Heart right ventricle (tissue), 16 donors: ENCODE measurements at regions of chr21 and their contacts with region 1.

Region 1: DNA sequence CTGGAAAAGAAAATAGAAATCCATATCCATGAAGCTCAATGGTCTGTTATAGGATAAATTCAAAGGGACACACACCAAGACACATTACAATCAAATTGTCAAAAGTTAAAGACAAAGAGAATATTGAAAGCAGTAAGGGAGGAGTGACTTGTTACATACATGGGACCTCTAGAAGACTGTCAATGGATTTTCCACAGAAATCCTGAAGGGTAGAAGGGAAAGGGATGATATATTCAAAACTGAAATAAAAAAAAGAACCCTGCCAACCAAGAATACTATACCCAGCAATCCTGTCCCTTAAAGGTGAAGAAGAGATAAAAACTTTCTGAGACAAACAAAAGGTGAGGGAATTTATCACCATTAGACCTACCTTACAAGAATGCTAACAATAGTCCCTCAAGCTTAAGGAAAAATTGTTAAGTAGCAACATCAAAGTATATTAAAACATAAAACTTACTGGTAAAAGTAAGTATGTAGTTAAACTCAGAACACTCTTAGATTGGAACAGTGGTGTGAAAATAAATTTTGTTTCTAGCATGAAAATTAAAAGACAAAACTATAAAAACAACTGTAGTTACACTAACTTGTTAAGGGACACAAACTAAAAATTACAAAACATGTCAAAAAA is 103.2 kb upstream of the APP start:
- DNase-seq: no peak
- ATAC-seq: no peak
- H3K4me3 ChIP-seq: no peak overlapping the region
- H3K27ac ChIP-seq: no peak overlapping the region
- H3K4me1 ChIP-seq: no peaks in the 10 kb centered on the region
- H3K27me3 ChIP-seq: no peaks in the 10 kb centered on the region
- CTCF ChIP-seq: no peak

Region 2: DNA sequence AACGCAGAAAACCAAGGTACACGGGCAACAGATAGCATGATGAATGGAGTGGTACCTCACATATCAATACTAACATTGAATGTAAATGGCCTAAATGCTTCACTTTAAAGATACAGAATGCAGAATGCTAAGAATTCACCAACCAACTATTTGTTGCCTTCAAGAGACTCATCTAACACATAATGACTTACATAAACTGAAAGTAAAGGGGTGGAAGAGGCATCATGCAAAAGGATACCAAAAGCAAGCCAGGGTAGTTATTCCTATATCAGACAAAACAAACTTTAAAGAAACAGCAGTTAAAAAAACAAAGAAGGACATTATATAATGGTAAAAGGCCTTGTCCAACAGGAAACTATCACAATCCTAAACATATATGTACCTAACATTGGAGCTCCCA is 33.8 kb after region 1 on chr21:
- intact Hi-C with region 1: no loop called
- DNase-seq: no peak
- ATAC-seq: no peak
- H3K4me3 ChIP-seq: no peak overlapping the region
- H3K27ac ChIP-seq: no peak overlapping the region
- H3K4me1 ChIP-seq: no peaks in the 10 kb centered on the region
- H3K27me3 ChIP-seq: no peaks in the 10 kb centered on the region
- CTCF ChIP-seq: no peak

Region 3: DNA sequence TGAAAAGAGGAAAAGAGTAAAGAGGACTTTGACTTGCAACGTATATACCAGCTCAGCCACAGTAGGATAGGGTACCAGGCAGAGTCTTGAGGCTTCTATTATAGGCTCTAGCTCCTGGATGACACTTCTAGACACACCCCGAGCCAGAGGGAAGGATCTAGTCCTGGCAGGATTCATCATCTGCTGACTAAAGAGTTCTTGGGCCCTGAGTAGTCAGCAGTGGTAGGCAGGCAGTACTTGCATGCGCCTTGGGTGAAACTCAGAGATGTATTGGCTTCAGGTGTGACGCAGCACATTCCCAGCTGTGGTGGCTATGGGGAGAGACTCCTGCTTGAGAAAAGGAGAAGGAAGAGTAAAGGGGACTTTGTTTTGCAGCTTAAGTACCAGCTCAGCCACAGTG is 59.1 kb after region 1 on chr21:
- intact Hi-C with region 1: loop called in 1 of 10 experiments (anchors 10 kb)
- DNase-seq: no peak
- ATAC-seq: no peak
- H3K4me3 ChIP-seq: no peak overlapping the region
- H3K27ac ChIP-seq: no peak overlapping the region
- H3K4me1 ChIP-seq: no peaks in the 10 kb centered on the region
- H3K27me3 ChIP-seq: no peaks in the 10 kb centered on the region
- CTCF ChIP-seq: no peak